ENCODE measurements at regions of chr1 and their contacts with region 1.

Region 1: DNA sequence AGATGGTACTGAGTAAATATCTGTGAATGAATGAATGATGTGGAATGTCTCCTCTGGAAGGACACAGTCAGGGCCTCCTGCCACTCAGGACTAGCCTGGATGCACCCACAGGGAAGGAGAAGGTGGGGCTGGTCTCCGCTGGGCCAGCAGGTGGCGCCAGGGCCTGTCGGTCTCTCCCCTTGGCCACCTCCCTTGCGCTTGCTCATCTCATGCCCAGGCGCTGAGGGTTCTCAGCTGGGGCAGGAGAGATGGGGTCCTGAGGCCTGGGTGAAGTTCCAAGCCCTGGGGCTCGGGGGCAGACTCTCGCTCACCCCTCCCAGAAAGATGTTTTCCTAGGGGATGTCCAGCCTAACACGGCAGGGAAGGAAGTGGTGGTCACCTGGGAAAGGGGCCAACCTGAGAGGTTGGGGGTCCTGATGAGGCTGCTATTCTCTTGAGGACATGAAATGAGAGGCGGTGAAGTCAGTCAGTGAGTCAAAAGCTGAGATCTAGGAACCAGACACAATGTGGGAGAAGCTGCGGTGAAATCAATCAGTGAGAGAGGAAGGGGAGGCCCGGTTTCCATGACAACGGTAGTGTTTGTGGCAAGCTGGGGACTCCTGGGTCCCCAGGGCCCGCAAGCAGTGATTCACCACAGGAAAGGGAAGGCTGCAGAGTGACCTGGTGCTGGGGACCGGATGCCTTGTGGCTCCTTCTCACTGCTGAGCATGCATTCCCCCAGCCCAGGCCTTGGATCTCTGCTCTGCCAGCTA is 14.6 kb upstream of the MEX3A start:
- DNase-seq: peak; percentile 92
- ATAC-seq: peak; percentile 87
- H3K4me3 Mint-ChIP-seq: no peak overlapping the region
- H3K27ac Mint-ChIP-seq: peak overlapping the region; percentile 76
- H3K4me1 Mint-ChIP-seq: peaks cover 42% of the 10 kb centered on the region
- H3K27me3 Mint-ChIP-seq: peaks cover 23% of the 10 kb centered on the region

Region 2: GRCh38 chr1:156114101-156114916 is 17.5 kb after region 1 on chr1 and contains the start of gene LMNA:
- CTCF ChIA-PET with region 1: interaction called, 979 read pairs
- DNase-seq: peak; percentile 81
- ATAC-seq: peak; percentile 90
- H3K4me3 Mint-ChIP-seq: peak within 1 kb of the TSS; percentile 83
- H3K27ac Mint-ChIP-seq: peak within 1 kb of the TSS; percentile 75
- H3K4me1 Mint-ChIP-seq: peaks cover 25% of the 10 kb centered on the region
- H3K27me3 Mint-ChIP-seq: peaks cover 34% of the 10 kb centered on the region
- total RNA-seq, gene LMNA: 37.3 to 41.9 TPM

Region 3: DNA sequence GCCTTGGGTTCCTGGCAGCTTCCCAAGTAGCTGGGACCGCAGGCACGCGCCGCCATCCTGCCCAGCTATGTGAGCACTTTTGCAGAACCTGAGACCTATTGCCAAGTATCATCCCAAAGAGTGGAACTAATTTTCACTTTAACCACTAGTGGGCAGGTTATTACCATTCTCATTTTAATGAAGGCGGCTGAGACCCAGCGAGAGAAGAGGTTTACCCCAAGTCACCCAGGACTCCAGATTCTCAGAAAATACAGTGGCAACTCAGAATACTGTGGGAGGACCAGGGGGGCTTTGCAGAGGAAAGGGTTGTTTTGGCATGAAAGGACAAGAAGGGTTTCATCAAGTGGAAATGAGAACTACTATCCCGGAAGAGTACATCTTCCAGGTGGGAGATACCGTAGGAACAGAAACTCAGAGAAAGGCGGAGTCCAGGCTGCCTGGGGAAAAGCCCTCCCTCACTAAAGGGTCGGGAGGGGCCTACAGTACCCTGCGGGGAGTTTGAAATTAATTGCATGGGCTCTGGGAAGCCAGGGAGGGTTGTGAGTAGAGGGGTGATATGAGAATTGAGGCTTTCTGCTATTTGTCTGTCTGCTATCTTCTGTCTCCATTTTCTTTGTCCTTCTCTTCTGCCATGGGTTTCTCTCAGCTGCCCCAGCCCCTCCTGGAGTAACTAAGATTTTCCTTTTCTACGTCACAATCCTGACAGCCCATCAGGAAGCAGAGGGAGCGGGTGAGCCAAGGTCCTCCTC is 49.4 kb after region 1 on chr1:
- CTCF ChIA-PET with region 1: interaction called, 12 read pairs
- DNase-seq: peak; percentile 70
- ATAC-seq: peak; percentile 90
- H3K4me3 Mint-ChIP-seq: peak overlapping the region; percentile 63
- H3K27ac Mint-ChIP-seq: peak overlapping the region; percentile 91
- H3K4me1 Mint-ChIP-seq: peaks cover 35% of the 10 kb centered on the region
- H3K27me3 Mint-ChIP-seq: no peaks in the 10 kb centered on the region

Region 4: GRCh38 chr1:156282479-156283222 is 185.8 kb after region 1 on chr1 and contains the start of gene SMG5:
- CTCF ChIA-PET with region 1: no interaction called
- DNase-seq: peak; percentile 99
- ATAC-seq: peak; percentile 92
- H3K4me3 Mint-ChIP-seq: peak within 1 kb of the TSS; percentile 94
- H3K27ac Mint-ChIP-seq: peak within 1 kb of the TSS; percentile 91
- H3K4me1 Mint-ChIP-seq: peaks cover 39% of the 10 kb centered on the region
- H3K27me3 Mint-ChIP-seq: no peaks in the 10 kb centered on the region
- total RNA-seq, gene SMG5: 89.4 to 103 TPM

Measured in activated CD8-positive, alpha-beta memory T cell treated with anti-CD3 and anti-CD28 coated beads, Interleukin-2, amount 10 ng/mL, durations not matched to agents 7 days and 5 days (primary cell).